Activated CD8-positive, alpha-beta memory T cell treated with anti-CD3 and anti-CD28 coated beads, Interleukin-2, amount 10 ng/mL, durations not matched to agents 7 days and 5 days (primary cell): ENCODE measurements at regions of chr21 and their contacts with region 1.

Region 1: GRCh38 chr21:42593007-42593806 is 60.2 kb upstream of the PDE9A start:
- DNase-seq: peak; percentile 79
- ATAC-seq: peak; percentile 93
- H3K4me3 Mint-ChIP-seq: no peak overlapping the region
- H3K27ac Mint-ChIP-seq: no peak overlapping the region
- H3K4me1 Mint-ChIP-seq: peaks cover 18% of the 10 kb centered on the region
- H3K27me3 Mint-ChIP-seq: peaks cover 22% of the 10 kb centered on the region

Region 2: GRCh38 chr21:42624095-42624790 is 31.0 kb after region 1 on chr21:
- CTCF ChIA-PET with region 1: no interaction called
- DNase-seq: no peak
- ATAC-seq: no peak
- H3K4me3 Mint-ChIP-seq: no peak overlapping the region
- H3K27ac Mint-ChIP-seq: no peak overlapping the region
- H3K4me1 Mint-ChIP-seq: no peaks in the 10 kb centered on the region
- H3K27me3 Mint-ChIP-seq: peaks cover 54% of the 10 kb centered on the region

Region 3: GRCh38 chr21:42811960-42812359 is 218.8 kb after region 1 on chr21:
- CTCF ChIA-PET with region 1: interaction called, 20 read pairs
- DNase-seq: peak; percentile 29
- ATAC-seq: no peak
- H3K4me3 Mint-ChIP-seq: no peak overlapping the region
- H3K27ac Mint-ChIP-seq: no peak overlapping the region
- H3K4me1 Mint-ChIP-seq: no peaks in the 10 kb centered on the region
- H3K27me3 Mint-ChIP-seq: peaks cover 16% of the 10 kb centered on the region

Region 4: GRCh38 chr21:42818328-42818749 is 225.1 kb after region 1 on chr21:
- CTCF ChIA-PET with region 1: interaction called, 20 read pairs
- DNase-seq: peak; percentile 67
- ATAC-seq: peak; percentile 68
- H3K4me3 Mint-ChIP-seq: no peak overlapping the region
- H3K27ac Mint-ChIP-seq: no peak overlapping the region
- H3K4me1 Mint-ChIP-seq: peaks cover 4% of the 10 kb centered on the region
- H3K27me3 Mint-ChIP-seq: peaks cover 7% of the 10 kb centered on the region

Region 5: DNA sequence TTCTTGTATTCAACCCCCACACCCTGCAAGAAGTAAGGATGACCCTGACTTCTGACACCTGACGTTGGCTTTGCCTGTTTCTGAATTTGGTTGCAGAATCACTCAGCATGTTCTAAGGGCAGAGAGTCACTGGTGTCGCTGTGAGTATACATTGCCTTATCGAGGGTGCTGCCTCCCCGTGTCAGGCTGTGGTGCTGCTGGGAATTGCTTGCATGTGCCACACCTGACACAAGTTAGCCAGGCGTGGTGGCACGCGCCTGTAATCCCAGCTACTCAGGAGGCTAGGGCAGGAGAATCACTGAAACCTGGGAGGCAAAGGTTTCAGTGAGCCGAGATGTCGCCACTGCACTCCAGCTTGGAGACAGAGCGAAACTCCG is 240.2 kb after region 1 on chr21:
- CTCF ChIA-PET with region 1: interaction called, 32 read pairs
- DNase-seq: peak; percentile 85
- ATAC-seq: peak; percentile 88
- H3K4me3 Mint-ChIP-seq: peak overlapping the region; percentile 10
- H3K27ac Mint-ChIP-seq: peak overlapping the region; percentile 52
- H3K4me1 Mint-ChIP-seq: peaks cover 35% of the 10 kb centered on the region
- H3K27me3 Mint-ChIP-seq: peaks cover 31% of the 10 kb centered on the region